ENCODE measurements at regions of chr3 and their contacts with region 1.

Region 1: DNA sequence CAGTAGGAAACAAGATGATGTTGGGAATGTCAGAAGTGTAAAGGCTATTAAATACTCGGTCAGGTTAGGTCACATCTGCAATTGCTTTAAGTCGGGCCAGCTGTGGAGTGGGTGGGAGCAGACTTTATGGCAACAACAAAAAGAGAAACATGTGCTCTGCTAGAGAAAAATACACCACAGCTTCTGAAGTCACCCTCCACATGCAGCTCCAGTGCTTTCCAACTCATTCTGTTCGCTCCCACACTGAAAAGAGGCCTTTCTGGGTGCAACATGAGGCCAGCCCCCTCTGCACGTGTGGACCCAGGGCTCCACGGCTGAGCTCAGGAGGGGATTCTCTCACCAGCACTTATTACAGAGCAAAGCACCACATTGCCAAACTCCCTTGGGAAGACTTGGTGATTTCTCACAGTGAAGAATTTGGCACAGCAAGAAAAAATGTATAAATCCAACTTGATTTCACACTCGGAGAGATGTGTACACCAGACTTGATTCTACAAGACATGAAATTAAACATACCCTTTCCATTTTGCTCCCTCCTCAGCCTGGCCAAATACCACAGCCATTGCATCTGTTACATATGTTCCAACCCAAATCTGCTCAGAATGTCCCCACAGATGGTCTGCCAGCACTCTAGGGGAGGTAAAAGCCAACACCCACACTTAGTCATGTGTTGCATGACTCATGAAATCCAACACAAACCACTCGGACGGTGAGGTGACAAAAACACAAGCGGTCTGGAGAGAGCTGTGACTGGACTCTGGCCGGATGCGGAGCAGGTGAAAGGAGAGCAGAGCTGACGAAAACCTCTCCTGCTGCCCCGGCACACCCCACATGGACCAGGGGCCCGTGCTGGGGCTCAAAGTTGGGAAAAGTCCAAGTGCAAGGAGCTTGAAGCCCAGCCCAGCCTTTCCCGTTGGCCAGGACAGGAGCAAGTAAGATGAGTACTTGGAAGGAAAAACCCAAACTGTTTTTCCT is 74.6 kb downstream of the ITGB5 start:
- DNase-seq: peak; percentile 83

Region 2: DNA sequence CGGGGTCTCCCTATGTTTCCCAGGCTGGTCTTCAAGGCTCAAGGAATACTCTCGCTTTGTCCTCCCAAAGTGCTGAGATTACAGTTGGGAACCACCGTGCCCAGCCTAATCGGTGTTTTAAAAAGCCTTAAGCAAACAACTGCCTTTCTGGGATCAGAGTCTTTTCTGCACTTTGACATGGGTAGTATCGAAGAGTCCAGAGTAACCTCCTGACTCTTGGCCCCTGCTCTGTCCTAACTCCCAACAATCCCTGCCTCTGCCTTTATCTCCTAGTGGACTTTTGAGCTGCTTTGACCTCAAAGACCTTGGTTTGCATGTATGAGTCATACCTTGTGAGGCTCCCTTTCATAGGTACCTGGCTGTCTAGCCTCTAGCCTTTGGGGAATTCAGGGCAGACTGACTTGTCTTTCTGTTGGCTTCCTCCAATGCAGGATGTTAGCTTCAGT is 1206.8 kb before region 1 on chr3:
- intact Hi-C with region 1: no loop called
- DNase-seq: no peak

Region 3: GRCh38 chr3:124768812-124769211 is 43.8 kb before region 1 on chr3:
- intact Hi-C with region 1: loop called (anchors 5 kb)
- DNase-seq: no peak

Region 4: DNA sequence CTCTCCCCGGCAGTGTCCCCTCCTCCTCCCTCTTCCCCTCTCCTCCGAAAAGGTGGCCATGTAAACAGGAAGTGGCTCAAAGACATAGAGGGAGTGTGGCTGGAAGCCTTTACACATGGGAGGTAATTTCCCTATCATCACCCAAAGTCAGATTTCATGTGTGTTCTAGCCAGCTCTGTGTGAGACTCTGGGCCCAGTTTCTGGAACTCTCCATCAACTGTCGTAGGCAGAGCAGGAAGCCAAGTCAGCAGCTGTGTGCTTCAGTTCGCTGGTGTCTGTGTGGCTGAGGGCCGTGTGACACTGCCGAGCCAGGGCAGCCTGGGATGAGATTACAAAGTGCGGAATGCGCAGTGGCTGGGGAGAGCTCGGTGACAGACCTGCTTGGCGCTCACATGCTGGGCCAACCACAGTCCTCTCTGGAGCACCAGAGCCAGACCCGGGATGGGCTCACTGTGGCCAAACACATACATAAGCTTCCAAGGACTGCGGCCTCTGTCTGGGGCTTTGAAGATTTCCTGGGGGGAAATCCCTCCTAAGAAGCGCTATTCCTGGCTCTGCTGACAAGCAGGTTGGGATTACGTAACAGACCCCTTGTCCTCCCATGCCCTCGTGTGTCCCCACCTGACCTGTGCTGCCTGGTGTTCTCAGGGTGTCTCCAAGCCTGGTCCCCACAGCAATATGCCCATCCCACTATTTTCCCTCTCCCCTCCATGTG is 31.7 kb before region 1 on chr3:
- intact Hi-C with region 1: loop called (anchors 2 kb)
- DNase-seq: peak; percentile 93